ENCODE measurements at regions of chr7 and their contacts with region 1.

Region 1: DNA sequence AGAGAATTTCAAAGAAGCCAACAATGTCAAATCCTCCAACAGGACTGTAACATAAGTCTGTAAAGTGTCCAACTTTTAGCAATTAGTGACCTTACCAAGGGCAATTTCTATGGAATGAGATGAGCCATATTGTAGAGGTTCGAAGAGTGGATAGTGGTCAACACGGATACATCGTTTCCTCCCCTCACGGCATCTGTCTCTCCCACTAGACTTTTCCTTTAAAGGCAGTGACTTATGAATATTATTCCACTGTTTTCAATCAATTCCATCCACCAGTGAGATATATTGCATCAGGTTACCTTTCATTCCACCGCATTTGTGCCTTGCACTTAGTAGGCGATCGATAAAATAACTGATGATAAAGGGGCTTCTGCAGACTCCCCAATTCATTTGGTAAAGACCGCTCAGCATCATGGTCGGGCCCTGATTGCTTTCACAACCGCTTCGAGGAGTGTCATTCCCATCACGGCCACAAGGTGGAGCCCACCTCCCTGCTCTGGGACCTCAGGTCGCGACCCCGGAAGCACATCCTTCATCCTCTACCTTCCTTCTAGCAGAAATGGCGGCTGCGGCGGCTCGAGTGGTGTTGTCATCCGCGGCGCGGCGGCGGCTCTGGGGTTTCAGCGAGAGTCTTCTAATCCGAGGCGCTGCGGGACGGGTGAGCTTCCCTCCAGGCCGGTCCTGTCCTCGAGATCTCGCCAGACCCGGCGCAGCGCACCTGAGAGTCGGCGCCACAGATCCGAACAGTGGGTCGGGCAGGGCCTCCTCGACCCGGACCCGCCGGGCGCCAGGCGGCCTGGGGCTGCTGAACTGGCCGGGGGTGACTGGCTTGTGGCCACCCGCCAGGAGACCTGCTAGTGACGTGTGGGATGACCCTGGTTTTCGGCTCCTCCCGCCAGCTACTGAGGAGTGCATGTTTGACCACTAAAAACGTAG is at the start of gene PMPCB:
- DNase-seq: peak; percentile 87
- ATAC-seq: peak; percentile 98
- H3K4me3 ChIP-seq: peak within 1 kb of the TSS; percentile 85
- H3K27ac ChIP-seq: peak within 1 kb of the TSS; percentile 76
- H3K4me1 ChIP-seq: peaks cover 2% of the 10 kb centered on the region; the same call in 1 of the 2 replicates
- H3K27me3 ChIP-seq: peaks cover 2% of the 10 kb centered on the region; the same call in 1 of the 2 replicates
- CTCF ChIP-seq: peak; percentile 95
- POLR2A ChIP-seq: peak; percentile 80
- RAD21 ChIP-seq: peak; percentile 62
- total RNA-seq, gene PMPCB: 66.7 and 72.8 TPM in 2 replicates

Region 2: GRCh38 chr7:103113164-103113563 is 184.0 kb before region 1 on chr7:
- CTCF ChIA-PET with region 1: no interaction called
- POLR2A ChIA-PET with region 1: no interaction called
- dilution Hi-C with region 1: no loop called
- in situ Hi-C with region 1: no loop called
- intact Hi-C with region 1: loop called (anchors 10 kb)
- DNase-seq: peak; percentile 93
- ATAC-seq: peak; percentile 97
- H3K4me3 ChIP-seq: no peak overlapping the region
- H3K27ac ChIP-seq: no peak overlapping the region
- H3K4me1 ChIP-seq: no peaks in the 10 kb centered on the region
- H3K27me3 ChIP-seq: no peaks in the 10 kb centered on the region
- CTCF ChIP-seq: no peak
- POLR2A ChIP-seq: no peak
- RAD21 ChIP-seq: 0 out of 2 replicates have a peak, but pooled peaks have one; percentile 4

Region 3: DNA sequence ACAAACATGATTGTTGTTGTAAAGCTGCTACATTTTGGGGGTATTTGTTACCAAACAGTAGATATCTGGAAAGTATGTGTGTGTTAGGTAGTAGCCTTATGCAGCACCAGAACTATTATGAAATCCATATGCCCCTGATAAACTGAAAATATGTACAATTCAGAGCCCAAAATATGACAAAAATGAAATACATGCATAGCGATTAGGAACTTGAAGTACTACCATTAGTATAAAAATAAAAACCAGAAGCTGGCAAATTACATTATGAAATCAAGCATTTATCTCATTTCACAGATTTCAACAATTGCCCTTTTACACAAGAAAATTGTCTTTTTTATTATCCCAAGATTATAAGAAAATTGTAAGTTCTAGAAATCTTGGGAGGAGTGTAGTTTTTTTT is 115.0 kb after region 1 on chr7:
- CTCF ChIA-PET with region 1: no interaction called
- POLR2A ChIA-PET with region 1: no interaction called
- dilution Hi-C with region 1: no loop called
- in situ Hi-C with region 1: no loop called
- intact Hi-C with region 1: loop called (anchors 1 kb)
- DNase-seq: no peak
- ATAC-seq: no peak
- H3K4me3 ChIP-seq: no peak overlapping the region
- H3K27ac ChIP-seq: no peak overlapping the region
- H3K4me1 ChIP-seq: no peaks in the 10 kb centered on the region
- H3K27me3 ChIP-seq: peaks cover 6% of the 10 kb centered on the region
- CTCF ChIP-seq: no peak
- POLR2A ChIP-seq: no peak
- RAD21 ChIP-seq: no peak

Measured in IMR-90 (cell line).